ENCODE measurements at regions of chr3 and their contacts with region 1.

Region 1: GRCh38 chr3:171187706-171188290 is 161.3 kb upstream of the SLC2A2 start:
- DNase-seq: no peak
- H3K4me3 Mint-ChIP-seq: no peak overlapping the region
- H3K27ac Mint-ChIP-seq: no peak overlapping the region
- H3K4me1 Mint-ChIP-seq: peaks cover 53% of the 10 kb centered on the region
- H3K27me3 Mint-ChIP-seq: no peaks in the 10 kb centered on the region

Region 2: GRCh38 chr3:171068658-171069057 is 119.1 kb before region 1 on chr3:
- CTCF ChIA-PET with region 1: no interaction called
- POLR2A ChIA-PET with region 1: no interaction called
- intact Hi-C with region 1: no loop called
- DNase-seq: no peak
- H3K4me3 Mint-ChIP-seq: no peak overlapping the region
- H3K27ac Mint-ChIP-seq: no peak overlapping the region
- H3K4me1 Mint-ChIP-seq: no peaks in the 10 kb centered on the region
- H3K27me3 Mint-ChIP-seq: no peaks in the 10 kb centered on the region

Region 3: DNA sequence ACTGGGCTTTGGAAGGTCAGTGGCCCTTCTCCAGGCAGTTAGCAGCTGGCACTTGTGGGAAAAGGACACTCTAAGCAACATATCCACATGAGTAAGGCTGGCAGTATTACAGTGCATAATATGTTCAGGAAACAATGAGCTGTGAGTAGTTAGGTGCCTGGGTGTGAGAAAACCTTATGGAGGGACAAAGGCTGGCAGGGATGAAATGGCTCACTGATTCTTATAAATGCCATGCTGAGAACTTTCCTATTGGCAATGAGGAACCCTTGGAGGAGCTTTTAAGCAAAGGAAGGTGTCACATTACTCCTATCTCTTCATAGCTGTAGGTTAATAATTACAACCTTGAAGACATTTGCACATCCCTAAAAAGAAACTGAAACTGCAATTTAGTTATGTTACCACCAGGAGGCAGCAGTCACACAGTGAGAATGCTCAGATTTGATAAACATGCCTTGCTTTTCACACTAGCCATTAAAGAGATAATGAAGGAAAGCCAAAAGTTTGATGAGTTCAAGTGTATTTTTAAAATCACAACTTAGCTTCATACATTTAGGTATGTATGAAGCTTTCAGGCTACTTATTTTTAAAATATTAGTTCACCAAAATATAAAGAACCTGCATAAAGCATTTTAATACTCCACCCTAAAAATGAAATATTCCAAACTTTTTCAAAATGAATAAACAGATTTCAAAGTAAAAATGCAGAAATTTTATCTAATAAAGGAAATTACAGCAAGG is 24.6 kb before region 1 on chr3:
- CTCF ChIA-PET with region 1: interaction called, 5 read pairs
- POLR2A ChIA-PET with region 1: interaction called, 3 read pairs
- intact Hi-C with region 1: loop called (anchors 2 kb)
- DNase-seq: no peak
- H3K4me3 Mint-ChIP-seq: no peak overlapping the region
- H3K27ac Mint-ChIP-seq: no peak overlapping the region
- H3K4me1 Mint-ChIP-seq: peaks cover 24% of the 10 kb centered on the region
- H3K27me3 Mint-ChIP-seq: no peaks in the 10 kb centered on the region

Region 4: GRCh38 chr3:171225708-171226107 is 37.9 kb after region 1 on chr3:
- CTCF ChIA-PET with region 1: no interaction called
- POLR2A ChIA-PET with region 1: no interaction called
- intact Hi-C with region 1: loop called (anchors 5 kb)
- DNase-seq: no peak
- H3K4me3 Mint-ChIP-seq: no peak overlapping the region
- H3K27ac Mint-ChIP-seq: peak overlapping the region; percentile 56
- H3K4me1 Mint-ChIP-seq: peaks cover 41% of the 10 kb centered on the region
- H3K27me3 Mint-ChIP-seq: no peaks in the 10 kb centered on the region

Region 5: DNA sequence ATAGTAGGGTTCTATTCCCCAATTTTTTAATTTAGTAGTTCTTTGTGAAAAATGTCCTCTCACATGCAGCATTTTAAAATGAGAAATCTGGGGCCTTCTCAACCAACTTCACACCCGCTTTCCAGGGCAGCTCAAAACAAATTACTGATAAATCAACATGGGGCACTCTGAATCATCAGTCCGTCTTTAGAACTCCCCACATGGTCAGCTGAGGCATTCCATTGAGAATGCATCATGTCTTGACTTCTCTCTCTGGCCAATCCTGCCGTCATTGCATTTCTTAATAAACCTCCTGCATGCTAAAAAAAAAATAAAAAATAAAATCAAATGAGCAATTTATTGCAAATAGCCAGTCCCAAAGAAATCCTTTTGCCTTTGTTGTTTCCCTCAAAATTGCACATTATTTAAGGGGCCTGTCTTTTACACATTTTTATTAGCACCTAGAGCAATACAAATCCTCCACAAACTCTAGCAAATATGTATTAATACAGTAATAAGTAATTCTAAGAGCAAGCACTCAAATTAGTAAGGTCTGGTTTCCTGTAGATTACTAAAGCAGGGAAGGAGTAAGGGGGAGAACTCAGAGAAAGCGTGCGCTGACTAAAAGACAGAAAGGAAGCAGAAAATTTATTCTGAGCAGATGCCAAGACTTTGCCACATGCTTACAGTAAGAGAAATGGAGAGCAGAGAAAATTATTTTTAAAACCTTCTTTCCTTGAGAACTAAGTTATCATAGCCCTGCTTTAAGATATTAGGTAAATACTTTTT is 96.7 kb after region 1 on chr3:
- CTCF ChIA-PET with region 1: no interaction called
- POLR2A ChIA-PET with region 1: no interaction called
- intact Hi-C with region 1: loop called (anchors 1 kb)
- DNase-seq: peak; percentile 31
- H3K4me3 Mint-ChIP-seq: peak overlapping the region; percentile 24
- H3K27ac Mint-ChIP-seq: peak overlapping the region; percentile 34
- H3K4me1 Mint-ChIP-seq: peaks cover 57% of the 10 kb centered on the region
- H3K27me3 Mint-ChIP-seq: no peaks in the 10 kb centered on the region

Region 6: GRCh38 chr3:171566803-171567422 is 379.1 kb after region 1 on chr3:
- CTCF ChIA-PET with region 1: interaction called, 17 read pairs
- POLR2A ChIA-PET with region 1: no interaction called
- intact Hi-C with region 1: no loop called
- DNase-seq: no peak
- H3K4me3 Mint-ChIP-seq: no peak overlapping the region
- H3K27ac Mint-ChIP-seq: no peak overlapping the region
- H3K4me1 Mint-ChIP-seq: peaks cover 12% of the 10 kb centered on the region
- H3K27me3 Mint-ChIP-seq: peaks cover 5% of the 10 kb centered on the region

Region 7: DNA sequence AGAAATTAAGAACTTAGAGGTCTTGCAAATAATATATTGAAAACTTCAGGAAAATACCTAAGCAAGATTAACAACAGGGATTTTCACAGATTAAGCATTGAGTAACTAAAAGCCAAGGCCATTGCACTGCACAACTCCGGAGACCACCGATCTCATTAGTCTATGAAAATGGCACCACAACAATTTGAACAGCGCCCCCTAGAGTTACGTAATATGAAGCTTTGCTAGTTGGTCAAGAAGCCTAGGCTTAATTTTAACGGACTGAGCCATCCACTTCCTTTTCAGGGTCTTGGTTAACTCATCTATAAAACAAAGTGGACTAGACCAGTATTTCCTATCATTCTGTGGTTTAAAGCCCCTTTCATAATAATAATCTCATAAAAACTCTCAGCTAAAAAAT is 680.2 kb after region 1 on chr3:
- CTCF ChIA-PET with region 1: no interaction called
- POLR2A ChIA-PET with region 1: no interaction called
- intact Hi-C with region 1: no loop called
- DNase-seq: no peak
- H3K4me3 Mint-ChIP-seq: no peak overlapping the region
- H3K27ac Mint-ChIP-seq: no peak overlapping the region
- H3K4me1 Mint-ChIP-seq: no peaks in the 10 kb centered on the region
- H3K27me3 Mint-ChIP-seq: peaks cover 2% of the 10 kb centered on the region

Region 8: GRCh38 chr3:172280406-172281051 is 1092.7 kb after region 1 on chr3:
- CTCF ChIA-PET with region 1: no interaction called
- POLR2A ChIA-PET with region 1: no interaction called
- intact Hi-C with region 1: no loop called
- DNase-seq: no peak
- H3K4me3 Mint-ChIP-seq: no peak overlapping the region
- H3K27ac Mint-ChIP-seq: no peak overlapping the region
- H3K4me1 Mint-ChIP-seq: no peaks in the 10 kb centered on the region
- H3K27me3 Mint-ChIP-seq: no peaks in the 10 kb centered on the region